Esophagus squamous epithelium (tissue), 5 donors: ENCODE measurements at regions of chr15 and their contacts with region 1.

Region 1: GRCh38 chr15:74540761-74541493 is at the start of gene ARID3B:
- DNase-seq: peak; percentile 89
- H3K4me3 ChIP-seq: peak within 1 kb of the TSS; percentile 65 to 98 (median 86)
- H3K27ac ChIP-seq: peak within 1 kb of the TSS; percentile 80 to 91 (median 85)
- H3K4me1 ChIP-seq: peaks cover 18 to 53% (median 19%) of the 10 kb centered on the region in 3 donors
- H3K27me3 ChIP-seq: no peaks in the 10 kb centered on the region
- CTCF ChIP-seq: no peak
- POLR2A ChIP-seq: peak in 1 of 4 donors; percentile 67
- total RNA-seq, gene ARID3B: 4.5 to 11.6 (median 6.4) TPM

Region 2: GRCh38 chr15:74420197-74420898 is 120.6 kb before region 1 on chr15:
- intact Hi-C with region 1: no loop called
- DNase-seq: no peak
- H3K4me3 ChIP-seq: no peak overlapping the region
- H3K27ac ChIP-seq: no peak overlapping the region
- H3K4me1 ChIP-seq: peaks cover 0 to 12% (median 0%) of the 10 kb centered on the region in 3 donors
- H3K27me3 ChIP-seq: no peaks in the 10 kb centered on the region
- CTCF ChIP-seq: no peak
- POLR2A ChIP-seq: no peak

Region 3: GRCh38 chr15:74614744-74615507 is 74.0 kb after region 1 on chr15:
- intact Hi-C with region 1: loop called (anchors 5 kb)
- DNase-seq: no peak
- H3K4me3 ChIP-seq: peak overlapping the region; percentile 72 to 95 (median 86)
- H3K27ac ChIP-seq: peak overlapping the region; percentile 92 to 99 (median 98)
- H3K4me1 ChIP-seq: peaks cover 21 to 67% (median 23%) of the 10 kb centered on the region in 3 donors
- H3K27me3 ChIP-seq: no peaks in the 10 kb centered on the region
- CTCF ChIP-seq: no peak
- POLR2A ChIP-seq: peak in 1 of 4 donors; percentile 48

Region 4: GRCh38 chr15:75201609-75202250 is 660.8 kb after region 1 on chr15 and contains the start of gene C15orf39:
- intact Hi-C with region 1: no loop called
- DNase-seq: no peak
- H3K4me3 ChIP-seq: peak within 1 kb of the TSS; percentile 75 to 98 (median 90)
- H3K27ac ChIP-seq: peak within 1 kb of the TSS; percentile 95 to 99 (median 97)
- H3K4me1 ChIP-seq: peaks cover 34 to 68% (median 45%) of the 10 kb centered on the region in 3 donors
- H3K27me3 ChIP-seq: no peaks in the 10 kb centered on the region
- CTCF ChIP-seq: peak; percentile 78 to 99 (median 96)
- POLR2A ChIP-seq: peak in 3 of 4 donors; percentile 83 to 99 (median 93)
- total RNA-seq, gene C15orf39: 12.3 to 33.3 (median 21.5) TPM